OCI-LY7 (cell line): ENCODE measurements at regions of chrX and their contacts with region 1.

Region 1: GRCh38 chrX:12955882-12956703 is 18.8 kb upstream of the TMSB4X start:
- DNase-seq: peak; percentile 88
- H3K4me3 ChIP-seq: peak overlapping the region; percentile 63
- H3K27ac ChIP-seq: peak overlapping the region; percentile 100
- H3K4me1 ChIP-seq: peaks cover 85% of the 10 kb centered on the region
- CTCF ChIP-seq: no peak

Region 2: GRCh38 chrX:12868747-12869146 is 87.3 kb before region 1 on chrX:
- CTCF ChIA-PET with region 1: no interaction called
- POLR2A ChIA-PET with region 1: interaction called, 5 read pairs
- intact Hi-C with region 1: loop called (anchors 5 kb)
- DNase-seq: peak; percentile 38
- H3K4me3 ChIP-seq: peak overlapping the region; percentile 67
- H3K27ac ChIP-seq: peak overlapping the region; percentile 90
- H3K4me1 ChIP-seq: peaks cover 77% of the 10 kb centered on the region
- CTCF ChIP-seq: no peak

Region 3: GRCh38 chrX:13081395-13082205 is 125.5 kb after region 1 on chrX:
- CTCF ChIA-PET with region 1: interaction called, 5 read pairs
- POLR2A ChIA-PET with region 1: interaction called, 15 read pairs
- intact Hi-C with region 1: loop called (anchors 1 kb)
- DNase-seq: peak; percentile 70
- H3K4me3 ChIP-seq: peak overlapping the region; percentile 39
- H3K27ac ChIP-seq: peak overlapping the region; percentile 93
- H3K4me1 ChIP-seq: peaks cover 100% of the 10 kb centered on the region
- CTCF ChIP-seq: no peak

Region 4: DNA sequence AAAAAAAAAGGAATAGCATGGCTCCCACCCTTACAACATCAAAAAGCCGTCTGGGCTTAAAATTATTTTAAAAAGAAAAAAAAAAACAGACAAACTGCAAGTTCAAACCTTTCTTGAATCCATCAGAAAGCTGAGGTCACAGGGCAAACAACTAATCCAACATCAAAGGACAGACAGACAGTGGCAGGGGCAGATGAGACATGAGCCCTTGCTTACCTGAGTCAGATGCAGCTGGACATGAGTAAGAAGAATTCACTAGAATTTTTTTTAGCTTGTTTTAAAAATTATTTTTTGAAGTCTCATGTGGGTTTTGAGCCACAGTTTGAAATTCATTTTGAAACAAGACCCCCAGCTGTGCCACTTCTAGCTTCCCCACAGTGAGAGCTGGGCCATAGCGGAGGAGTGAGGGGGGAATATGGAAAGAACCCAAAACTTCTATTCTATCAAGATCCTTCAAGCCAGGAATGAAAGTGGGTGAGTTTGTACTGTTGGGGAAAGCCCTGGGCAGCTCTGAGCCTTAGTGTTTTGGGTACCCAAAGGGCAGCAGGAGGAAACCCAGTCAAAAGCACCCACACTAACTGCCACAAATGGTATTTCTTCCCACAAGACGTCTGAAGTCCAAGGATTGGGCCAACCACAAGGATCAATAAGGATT is 252.3 kb after region 1 on chrX:
- CTCF ChIA-PET with region 1: no interaction called
- POLR2A ChIA-PET with region 1: no interaction called
- intact Hi-C with region 1: no loop called
- DNase-seq: no peak
- H3K4me3 ChIP-seq: no peak overlapping the region
- H3K27ac ChIP-seq: no peak overlapping the region
- H3K4me1 ChIP-seq: no peaks in the 10 kb centered on the region
- CTCF ChIP-seq: no peak